ENCODE measurements at regions of chr10 and their contacts with region 1.

Region 1: GRCh38 chr10:54940418-54940817 is 139.4 kb upstream of the PCDH15 start:
- DNase-seq: no peak
- ATAC-seq: no peak
- H3K4me3 ChIP-seq: no peak overlapping the region
- H3K4me3 Mint-ChIP-seq: no peak overlapping the region
- H3K27ac ChIP-seq: no peak overlapping the region
- H3K27ac Mint-ChIP-seq: no peak overlapping the region
- H3K4me1 ChIP-seq: no peaks in the 10 kb centered on the region
- H3K4me1 Mint-ChIP-seq: no peaks in the 10 kb centered on the region
- H3K27me3 ChIP-seq: no peaks in the 10 kb centered on the region
- H3K27me3 Mint-ChIP-seq: no peaks in the 10 kb centered on the region
- CTCF ChIP-seq: no peak

Region 2: GRCh38 chr10:54880996-54881395 is 59.4 kb before region 1 on chr10:
- CTCF ChIA-PET with region 1: no interaction called
- POLR2A ChIA-PET with region 1: no interaction called
- intact Hi-C with region 1: loop called in 1 of 2 experiments (anchors 5 kb)
- DNase-seq: no peak
- ATAC-seq: no peak
- H3K4me3 ChIP-seq: no peak overlapping the region
- H3K4me3 Mint-ChIP-seq: no peak overlapping the region
- H3K27ac ChIP-seq: no peak overlapping the region
- H3K27ac Mint-ChIP-seq: no peak overlapping the region
- H3K4me1 ChIP-seq: no peaks in the 10 kb centered on the region
- H3K4me1 Mint-ChIP-seq: no peaks in the 10 kb centered on the region
- H3K27me3 ChIP-seq: no peaks in the 10 kb centered on the region
- H3K27me3 Mint-ChIP-seq: no peaks in the 10 kb centered on the region
- CTCF ChIP-seq: no peak